ENCODE measurements at regions of chr7 and their contacts with region 1.

Region 1: GRCh38 chr7:28298870-28299518 is 113.3 kb upstream of the CREB5 start:
- DNase-seq: peak in 3 of 5 donors; percentile 24 to 34 (median 28)
- ATAC-seq: peak; percentile 66 to 89 (median 82)
- H3K4me3 ChIP-seq: no peak overlapping the region
- H3K27ac ChIP-seq: peak overlapping the region in 1 of 12 donors; percentile 21
- H3K4me1 ChIP-seq: peaks cover 0 to 12% (median 7%) of the 10 kb centered on the region in 12 donors
- H3K27me3 ChIP-seq: no peaks in the 10 kb centered on the region
- CTCF ChIP-seq: peak in 9 of 12 donors; percentile 29 to 57 (median 44)
- POLR2A ChIP-seq: no peak

Region 2: DNA sequence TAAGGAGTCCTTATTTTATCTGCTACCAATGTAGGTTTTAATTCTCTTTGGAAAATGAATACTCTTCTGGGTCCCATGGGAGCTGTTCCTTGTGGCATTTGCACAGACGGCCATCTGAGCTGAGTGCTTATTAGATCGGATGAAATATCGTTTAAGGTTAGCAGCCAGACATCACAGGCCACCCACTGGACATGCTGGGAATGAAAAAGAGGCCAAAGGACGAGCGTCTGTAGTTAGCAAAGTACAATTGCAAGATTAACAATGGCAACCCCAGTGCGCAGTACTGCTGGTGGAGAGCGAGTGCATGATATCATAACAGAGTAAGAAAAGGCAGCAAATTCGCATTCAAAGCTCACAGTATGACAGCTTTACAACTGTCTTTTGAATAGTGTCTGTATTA is 85.0 kb after region 1 on chr7:
- intact Hi-C with region 1: loop called in 4 of 10 experiments (anchors 5 to 10 kb)
- DNase-seq: no peak
- ATAC-seq: no peak
- H3K4me3 ChIP-seq: no peak overlapping the region
- H3K27ac ChIP-seq: no peak overlapping the region
- H3K4me1 ChIP-seq: peaks cover 0 to 6% (median 0%) of the 10 kb centered on the region in 12 donors
- H3K27me3 ChIP-seq: no peaks in the 10 kb centered on the region
- CTCF ChIP-seq: no peak
- POLR2A ChIP-seq: no peak

Region 3: DNA sequence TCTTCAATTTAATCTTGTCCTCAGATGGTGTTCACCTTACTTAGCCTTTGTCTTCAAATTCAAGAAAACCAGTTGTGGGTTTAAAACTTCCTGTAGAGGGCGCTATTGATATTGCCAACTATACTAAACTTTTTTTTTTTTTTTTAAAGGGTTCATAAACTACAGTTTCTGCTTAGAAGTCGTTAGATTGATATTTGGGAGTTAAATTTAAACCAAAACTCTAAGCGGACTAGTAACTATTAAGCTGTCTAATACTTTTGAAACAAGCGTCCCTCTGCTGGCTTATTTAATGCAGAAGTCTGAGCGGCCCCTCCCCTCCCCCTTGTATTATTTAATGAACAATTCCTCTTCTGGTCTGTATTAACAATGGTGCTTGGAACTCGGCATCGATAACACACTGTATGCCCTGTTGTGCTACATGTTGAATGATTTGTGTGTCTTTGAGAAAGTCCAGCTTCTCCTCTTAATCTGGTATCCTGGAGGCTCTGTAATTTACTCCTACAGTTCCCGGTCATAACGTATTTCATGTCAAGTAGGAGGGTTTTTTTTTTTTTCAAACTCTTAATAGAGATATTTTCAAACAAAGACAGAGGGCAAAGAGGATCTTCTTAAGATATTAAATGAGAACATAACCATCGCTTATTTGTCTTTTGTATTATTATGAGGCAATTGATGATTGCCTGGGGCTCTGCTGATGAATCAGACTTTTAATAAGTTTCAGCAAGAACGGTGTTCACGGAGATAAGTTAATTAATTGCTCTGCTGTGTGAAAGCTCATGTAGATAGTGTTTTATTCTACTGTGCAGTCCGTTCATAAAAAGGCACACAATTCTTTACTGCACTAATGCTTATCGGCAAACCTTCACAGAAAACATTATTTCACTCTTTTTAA is 90.8 kb after region 1 on chr7:
- intact Hi-C with region 1: loop called in 4 of 10 experiments (anchors 5 to 10 kb)
- DNase-seq: no peak
- ATAC-seq: peak in 2 of 4 donors; percentile 38 to 44
- H3K4me3 ChIP-seq: peak overlapping the region in 11 of 12 donors; percentile 8 to 52 (median 43)
- H3K27ac ChIP-seq: peak overlapping the region in 4 of 12 donors; percentile 1 to 53 (median 38)
- H3K4me1 ChIP-seq: peaks cover 0 to 5% (median 0%) of the 10 kb centered on the region in 12 donors
- H3K27me3 ChIP-seq: peaks cover 0 to 3% (median 0%) of the 10 kb centered on the region in 9 donors
- CTCF ChIP-seq: peak; percentile 73 to 92 (median 84)
- POLR2A ChIP-seq: no peak

Measured in heart left ventricle (tissue), 16 donors.